Esophagus muscularis mucosa (tissue), 4 donors: ENCODE measurements at regions of chr9 and their contacts with region 1.

Region 1: DNA sequence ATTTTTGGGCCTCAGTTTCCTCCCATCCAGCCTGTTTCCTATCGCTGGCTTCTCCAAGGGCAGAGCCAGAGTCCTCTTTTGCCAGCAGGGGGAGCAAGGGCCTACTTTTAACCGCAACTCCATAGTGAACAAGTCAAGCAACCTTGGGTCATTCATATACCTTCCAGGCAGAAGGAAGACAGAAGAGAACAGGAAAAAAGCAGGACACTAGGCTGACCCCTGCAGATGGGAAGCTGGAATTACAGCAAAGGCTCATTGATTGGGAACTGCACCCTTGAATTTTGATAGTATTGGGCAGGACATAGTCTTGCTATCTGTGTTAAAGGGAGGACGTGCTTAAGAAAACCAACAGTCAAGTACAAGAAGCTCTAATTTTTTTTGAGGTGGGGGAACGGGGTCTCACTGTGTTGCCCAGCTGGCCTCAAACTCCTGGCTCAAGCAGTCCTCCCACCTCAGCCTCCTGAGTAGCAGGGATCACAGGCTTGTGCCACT is 30.1 kb downstream of the QRFP start:
- DNase-seq: no peak
- H3K4me3 ChIP-seq: no peak overlapping the region
- H3K27ac ChIP-seq: peak overlapping the region in 3 of 4 donors; percentile 10 to 63 (median 10)
- H3K4me1 ChIP-seq: peaks cover 47 to 100% (median 93%) of the 10 kb centered on the region in 4 donors
- H3K27me3 ChIP-seq: no peaks in the 10 kb centered on the region
- CTCF ChIP-seq: peak; percentile 77 to 88 (median 79)
- EP300 ChIP-seq: no peak
- POLR2A ChIP-seq: no peak

Region 2: DNA sequence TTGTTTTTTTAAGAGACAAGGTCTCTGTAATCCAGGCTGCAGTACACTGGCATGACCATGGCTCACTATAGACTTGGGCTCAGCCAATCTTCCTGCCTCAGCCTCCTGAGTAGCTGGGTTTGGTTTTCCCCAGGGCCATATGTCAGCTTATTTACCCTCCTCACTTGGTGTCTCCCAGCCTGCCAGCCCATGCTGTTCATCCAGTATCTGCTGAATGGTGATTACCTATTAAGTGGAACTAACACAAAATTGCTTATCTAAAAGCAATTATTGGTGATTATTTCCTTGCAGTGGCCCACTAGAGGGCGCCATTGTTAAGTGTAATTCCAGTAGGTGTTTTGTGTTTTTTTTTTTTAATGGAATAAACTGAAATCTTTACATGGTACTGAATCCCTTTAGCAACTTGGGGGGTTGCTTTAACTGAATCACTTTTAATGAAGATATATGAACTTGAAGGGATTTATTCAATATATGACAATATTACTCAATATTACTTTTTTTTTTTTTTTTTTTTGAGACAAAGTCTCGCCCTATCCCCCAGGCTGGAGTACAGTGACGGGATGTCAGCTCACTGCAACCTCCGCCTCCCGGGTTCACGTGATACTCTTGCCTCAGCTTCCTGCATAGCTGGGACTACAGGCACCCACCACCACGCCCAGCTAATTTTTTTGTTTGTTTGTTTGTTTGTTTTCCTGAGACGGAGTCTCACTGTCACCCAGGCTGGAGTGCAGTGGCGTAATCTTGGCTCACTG is 159.1 kb before region 1 on chr9:
- intact Hi-C with region 1: loop called (anchors 2 kb)
- DNase-seq: no peak
- H3K4me3 ChIP-seq: no peak overlapping the region
- H3K27ac ChIP-seq: no peak overlapping the region
- H3K4me1 ChIP-seq: peaks cover 0 to 16% (median 14%) of the 10 kb centered on the region in 4 donors
- H3K27me3 ChIP-seq: no peaks in the 10 kb centered on the region
- CTCF ChIP-seq: peak; percentile 65 to 76 (median 68)
- EP300 ChIP-seq: no peak
- POLR2A ChIP-seq: no peak

Region 3: GRCh38 chr9:130770679-130771442 is 95.7 kb before region 1 on chr9:
- intact Hi-C with region 1: loop called (anchors 2 kb)
- DNase-seq: no peak
- H3K4me3 ChIP-seq: no peak overlapping the region
- H3K27ac ChIP-seq: no peak overlapping the region
- H3K4me1 ChIP-seq: peaks cover 14 to 55% (median 39%) of the 10 kb centered on the region in 4 donors
- H3K27me3 ChIP-seq: no peaks in the 10 kb centered on the region
- CTCF ChIP-seq: peak; percentile 62 to 77 (median 73)
- EP300 ChIP-seq: no peak
- POLR2A ChIP-seq: no peak

Region 4: DNA sequence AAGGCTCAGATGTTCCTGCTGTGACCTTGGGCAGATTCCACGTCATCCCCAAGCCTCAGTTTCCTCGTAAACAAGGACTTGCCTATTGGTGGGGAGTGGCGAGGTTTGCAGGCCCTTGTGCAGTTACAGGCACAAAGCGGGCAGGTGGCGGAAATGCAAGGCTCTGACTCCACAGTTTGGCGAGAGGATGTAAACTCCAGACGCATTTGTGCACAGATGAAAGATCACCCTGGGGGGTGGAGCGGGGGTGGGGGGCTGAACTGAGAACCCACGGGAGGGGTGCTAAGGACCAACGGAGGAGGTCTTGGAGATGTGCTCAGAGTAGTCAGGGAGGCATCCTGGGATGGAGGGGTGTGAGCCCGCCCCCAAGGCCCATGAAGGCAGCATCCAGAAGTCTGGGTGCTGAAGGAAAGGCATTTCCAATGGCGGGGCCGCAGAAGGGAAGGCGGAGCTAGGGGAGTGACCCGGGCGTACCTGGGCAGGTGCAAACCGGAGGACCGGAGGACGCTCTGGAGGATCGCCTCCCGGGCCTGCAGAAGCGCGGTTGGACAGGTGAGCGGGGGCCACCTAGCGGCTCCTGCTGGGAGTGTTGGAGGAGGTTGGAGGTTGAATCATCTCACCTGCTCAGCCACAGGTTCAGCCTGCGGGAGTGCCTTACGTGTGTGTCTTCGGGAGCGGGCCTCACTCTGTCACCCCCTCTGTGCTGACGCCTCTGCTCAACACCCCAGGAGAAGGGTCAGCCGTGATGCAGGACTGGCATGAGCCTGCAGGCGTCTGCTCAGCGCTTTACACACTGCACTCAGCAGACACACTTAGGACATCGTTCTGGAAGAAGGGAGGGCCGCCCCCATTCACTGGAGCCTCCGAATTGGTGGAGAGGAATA is 74.4 kb after region 1 on chr9:
- intact Hi-C with region 1: loop called (anchors 2 kb)
- DNase-seq: no peak
- H3K4me3 ChIP-seq: no peak overlapping the region
- H3K27ac ChIP-seq: no peak overlapping the region
- H3K4me1 ChIP-seq: peaks cover 18 to 55% (median 51%) of the 10 kb centered on the region in 4 donors
- H3K27me3 ChIP-seq: peaks cover 14 to 82% (median 35%) of the 10 kb centered on the region in 4 donors
- CTCF ChIP-seq: peak; percentile 78 to 86 (median 81)
- EP300 ChIP-seq: no peak
- POLR2A ChIP-seq: no peak

Region 5: GRCh38 chr9:131046581-131047202 is 180.2 kb after region 1 on chr9:
- intact Hi-C with region 1: loop called (anchors 5 kb)
- DNase-seq: no peak
- H3K4me3 ChIP-seq: peak overlapping the region in 2 of 4 donors; percentile 14 to 20
- H3K27ac ChIP-seq: no peak overlapping the region
- H3K4me1 ChIP-seq: peaks cover 0 to 8% (median 6%) of the 10 kb centered on the region in 4 donors
- H3K27me3 ChIP-seq: peaks cover 0 to 10% (median 0%) of the 10 kb centered on the region in 4 donors
- CTCF ChIP-seq: peak; percentile 86 to 95 (median 92)
- EP300 ChIP-seq: no peak
- POLR2A ChIP-seq: no peak

Region 6: DNA sequence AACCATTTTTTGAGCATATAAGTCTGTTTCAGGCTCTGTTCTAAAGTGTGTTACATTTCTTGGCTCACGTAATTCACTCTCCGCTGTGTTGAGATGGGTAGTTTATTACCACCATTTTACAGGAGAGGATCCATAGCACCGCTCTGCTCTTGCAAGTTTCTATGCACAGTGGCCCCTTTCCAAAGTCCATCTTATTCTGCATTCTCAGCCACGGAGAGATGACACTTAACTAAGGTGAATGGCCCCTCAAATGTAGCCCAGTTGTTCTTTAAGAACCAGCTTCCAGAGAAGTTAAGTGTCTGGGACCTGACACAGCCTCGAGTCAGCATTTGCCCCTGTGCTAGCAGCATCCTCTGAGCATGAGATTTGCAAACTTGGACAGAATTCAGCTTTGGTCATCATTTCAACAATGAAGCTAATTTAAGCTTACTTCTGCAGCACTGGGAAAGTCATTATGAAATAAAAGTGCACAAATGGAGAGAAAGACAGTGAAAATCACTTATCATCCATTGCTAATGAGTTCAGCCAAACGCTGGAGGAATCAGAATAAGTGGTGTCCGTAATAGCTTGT is 347.9 kb after region 1 on chr9:
- intact Hi-C with region 1: no loop called
- DNase-seq: no peak
- H3K4me3 ChIP-seq: no peak overlapping the region
- H3K27ac ChIP-seq: peak overlapping the region in 1 of 4 donors; percentile 11
- H3K4me1 ChIP-seq: peaks cover 3 to 41% (median 35%) of the 10 kb centered on the region in 4 donors
- H3K27me3 ChIP-seq: no peaks in the 10 kb centered on the region
- CTCF ChIP-seq: no peak
- EP300 ChIP-seq: no peak
- POLR2A ChIP-seq: no peak